Naive thymus-derived CD4-positive, alpha-beta T cell (primary cell): ENCODE measurements at regions of chr19 and their contacts with region 1.

Region 1: GRCh38 chr19:17075035-17075863 is at the starts of genes HAUS8 and MYO9B:
- DNase-seq: peak; percentile 96 to 100 (median 100)
- ATAC-seq: peak; percentile 98
- H3K4me3 ChIP-seq: peak within 1 kb of the TSS; percentile 94
- H3K4me3 Mint-ChIP-seq: peak within 1 kb of the TSS; percentile 96 to 100 (median 98)
- H3K27ac ChIP-seq: peak within 1 kb of the TSS; percentile 88
- H3K27ac Mint-ChIP-seq: peak within 1 kb of the TSS; percentile 86 to 99 (median 97)
- H3K4me1 ChIP-seq: peaks cover 28 to 32% of the 10 kb centered on the region in 2 donors
- H3K4me1 Mint-ChIP-seq: peaks cover 45 to 65% (median 55%) of the 10 kb centered on the region in 7 donors
- H3K27me3 ChIP-seq: no peaks in the 10 kb centered on the region
- H3K27me3 Mint-ChIP-seq: no peaks in the 10 kb centered on the region
- total RNA-seq, gene HAUS8: 16.7 to 31.5 (median 19.3) TPM
- total RNA-seq, gene MYO9B: 154 to 297 (median 205) TPM

Region 2: DNA sequence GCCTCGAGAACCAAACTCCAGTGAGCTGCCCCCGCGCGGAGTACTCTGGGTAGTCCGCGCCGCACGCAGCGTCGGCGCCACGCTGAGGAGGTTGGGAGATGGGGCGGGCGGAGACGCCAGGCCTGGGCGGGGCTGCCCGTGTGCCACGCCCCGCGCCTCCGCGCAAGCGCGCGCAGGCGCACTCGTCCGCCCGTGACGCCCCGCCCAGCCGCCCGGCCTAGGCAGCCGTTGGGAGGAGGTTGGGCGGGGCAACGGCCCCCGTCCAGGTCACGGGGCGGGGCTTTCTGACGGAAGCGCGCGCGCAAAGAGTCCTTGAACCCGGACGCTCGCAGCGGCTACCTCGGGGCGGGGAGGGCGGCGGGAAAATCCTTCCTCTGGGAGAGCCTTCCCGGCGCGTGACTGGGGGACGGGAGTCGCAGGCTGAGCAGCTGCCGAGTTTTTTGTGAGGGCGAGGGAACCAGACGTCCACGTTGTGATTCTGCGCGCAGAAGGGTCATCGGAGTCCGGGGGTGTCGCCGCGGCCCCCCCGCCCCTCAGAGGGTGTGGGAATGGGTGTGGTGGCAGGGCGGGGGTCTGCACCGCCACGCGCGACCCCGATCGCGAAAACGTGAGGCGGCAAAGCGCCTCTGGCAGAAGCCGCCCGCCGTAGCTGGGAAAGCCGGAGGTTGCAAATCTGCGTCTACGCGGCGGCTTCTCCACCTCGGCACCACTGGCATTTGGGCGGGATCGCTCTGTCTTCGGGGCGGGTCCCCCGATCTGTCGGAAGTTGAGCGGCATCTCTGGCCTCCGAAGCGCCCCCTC is 446.9 kb before region 1 on chr19 and contains the start of gene MED26:
- CTCF ChIA-PET with region 1: no interaction called
- POLR2A ChIA-PET with region 1: no interaction called
- intact Hi-C with region 1: loop called (anchors 1 kb)
- DNase-seq: peak; percentile 91 to 97 (median 94)
- ATAC-seq: peak; percentile 97
- H3K4me3 ChIP-seq: peak within 1 kb of the TSS; percentile 92
- H3K4me3 Mint-ChIP-seq: peak within 1 kb of the TSS; percentile 92 to 98 (median 97)
- H3K27ac ChIP-seq: peak within 1 kb of the TSS; percentile 97
- H3K27ac Mint-ChIP-seq: peak within 1 kb of the TSS; percentile 88 to 99 (median 98)
- H3K4me1 ChIP-seq: peaks cover 15% of the 10 kb centered on the region in 2 donors
- H3K4me1 Mint-ChIP-seq: peaks cover 34 to 49% (median 44%) of the 10 kb centered on the region in 7 donors
- H3K27me3 ChIP-seq: no peaks in the 10 kb centered on the region
- H3K27me3 Mint-ChIP-seq: peaks cover 0 to 1% (median 0%) of the 10 kb centered on the region in 5 donors
- total RNA-seq, gene MED26: 14.2 to 34.3 (median 17.4) TPM

Region 3: DNA sequence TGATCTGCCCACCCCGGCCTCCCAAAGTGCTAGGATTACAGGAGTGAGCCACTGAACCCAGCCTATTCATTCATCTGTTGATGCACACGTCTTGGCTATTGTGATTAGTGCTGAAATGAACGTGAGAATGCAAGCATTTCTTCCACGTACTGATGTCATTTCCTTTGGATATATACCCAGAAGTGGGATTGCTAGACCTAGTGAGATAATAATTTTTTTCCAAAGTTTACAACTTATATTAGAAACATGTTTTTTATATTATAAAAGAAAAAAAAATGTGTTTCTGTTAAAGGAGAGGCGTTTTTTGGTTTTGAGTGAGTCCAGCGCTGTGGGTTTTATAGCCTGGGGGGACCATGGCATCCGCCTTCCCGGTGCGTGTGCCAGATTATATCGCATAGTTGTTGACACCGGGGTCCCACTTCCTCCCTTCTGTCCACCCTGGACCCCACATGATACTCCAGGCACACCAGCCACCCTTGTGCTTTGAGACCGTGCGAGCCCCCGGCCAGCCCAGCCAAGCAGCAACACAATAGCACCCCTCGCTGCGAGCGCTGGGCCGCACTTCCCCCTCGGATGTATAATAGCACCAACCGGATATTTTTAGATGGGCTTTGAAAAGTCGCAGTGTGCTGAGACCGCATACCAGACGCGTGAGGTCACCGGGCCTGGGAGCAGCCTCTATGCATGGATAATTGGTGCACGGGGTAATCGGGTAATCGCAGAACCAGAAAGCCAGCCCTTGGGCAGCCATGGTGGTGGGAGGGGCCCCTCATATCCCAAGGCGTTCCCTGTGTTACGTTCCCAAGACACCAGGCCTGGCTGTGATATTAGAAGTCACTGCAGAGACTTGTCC is 60.0 kb after region 1 on chr19:
- CTCF ChIA-PET with region 1: no interaction called
- POLR2A ChIA-PET with region 1: no interaction called
- intact Hi-C with region 1: loop called in 1 of 2 experiments (anchors 2 kb)
- DNase-seq: peak in 8 of 9 donors; percentile 19 to 54 (median 46)
- ATAC-seq: peak; percentile 73
- H3K4me3 ChIP-seq: no peak overlapping the region
- H3K4me3 Mint-ChIP-seq: peak overlapping the region; percentile 41 to 89 (median 79)
- H3K27ac ChIP-seq: no peak overlapping the region
- H3K27ac Mint-ChIP-seq: peak overlapping the region; percentile 40 to 92 (median 85)
- H3K4me1 ChIP-seq: peaks cover 4 to 11% of the 10 kb centered on the region in 2 donors
- H3K4me1 Mint-ChIP-seq: peaks cover 0 to 34% (median 23%) of the 10 kb centered on the region in 7 donors
- H3K27me3 ChIP-seq: no peaks in the 10 kb centered on the region
- H3K27me3 Mint-ChIP-seq: no peaks in the 10 kb centered on the region

Region 4: GRCh38 chr19:17235618-17236377 is 160.5 kb after region 1 on chr19:
- CTCF ChIA-PET with region 1: no interaction called
- POLR2A ChIA-PET with region 1: interaction called, 8 read pairs
- intact Hi-C with region 1: loop called in 1 of 2 experiments (anchors 1 kb)
- DNase-seq: peak; percentile 62 to 75 (median 73)
- ATAC-seq: peak; percentile 95
- H3K4me3 ChIP-seq: peak overlapping the region; percentile 74
- H3K4me3 Mint-ChIP-seq: peak overlapping the region in 9 of 10 donors; percentile 49 to 88 (median 83)
- H3K27ac ChIP-seq: peak overlapping the region; percentile 64
- H3K27ac Mint-ChIP-seq: peak overlapping the region in 1 of 9 donors; percentile 23
- H3K4me1 ChIP-seq: peaks cover 0 to 11% of the 10 kb centered on the region in 2 donors
- H3K4me1 Mint-ChIP-seq: peaks cover 4 to 22% (median 16%) of the 10 kb centered on the region in 7 donors
- H3K27me3 ChIP-seq: no peaks in the 10 kb centered on the region
- H3K27me3 Mint-ChIP-seq: no peaks in the 10 kb centered on the region

Region 5: GRCh38 chr19:17336872-17337722 is 261.8 kb after region 1 on chr19 and contains the start of gene GTPBP3:
- CTCF ChIA-PET with region 1: no interaction called
- POLR2A ChIA-PET with region 1: interaction called, 3 read pairs
- intact Hi-C with region 1: loop called (anchors 1 kb)
- DNase-seq: peak; percentile 84 to 99 (median 95)
- ATAC-seq: peak; percentile 96
- H3K4me3 ChIP-seq: peak within 1 kb of the TSS; percentile 76
- H3K4me3 Mint-ChIP-seq: peak within 1 kb of the TSS; percentile 86 to 96 (median 92)
- H3K27ac ChIP-seq: peak within 1 kb of the TSS; percentile 79
- H3K27ac Mint-ChIP-seq: peak within 1 kb of the TSS; percentile 78 to 95 (median 93)
- H3K4me1 ChIP-seq: peaks cover 16 to 22% of the 10 kb centered on the region in 2 donors
- H3K4me1 Mint-ChIP-seq: peaks cover 22 to 55% (median 27%) of the 10 kb centered on the region in 7 donors
- H3K27me3 ChIP-seq: no peaks in the 10 kb centered on the region
- H3K27me3 Mint-ChIP-seq: no peaks in the 10 kb centered on the region
- total RNA-seq, gene GTPBP3: 29.6 to 59.8 (median 40.4) TPM

Region 6: DNA sequence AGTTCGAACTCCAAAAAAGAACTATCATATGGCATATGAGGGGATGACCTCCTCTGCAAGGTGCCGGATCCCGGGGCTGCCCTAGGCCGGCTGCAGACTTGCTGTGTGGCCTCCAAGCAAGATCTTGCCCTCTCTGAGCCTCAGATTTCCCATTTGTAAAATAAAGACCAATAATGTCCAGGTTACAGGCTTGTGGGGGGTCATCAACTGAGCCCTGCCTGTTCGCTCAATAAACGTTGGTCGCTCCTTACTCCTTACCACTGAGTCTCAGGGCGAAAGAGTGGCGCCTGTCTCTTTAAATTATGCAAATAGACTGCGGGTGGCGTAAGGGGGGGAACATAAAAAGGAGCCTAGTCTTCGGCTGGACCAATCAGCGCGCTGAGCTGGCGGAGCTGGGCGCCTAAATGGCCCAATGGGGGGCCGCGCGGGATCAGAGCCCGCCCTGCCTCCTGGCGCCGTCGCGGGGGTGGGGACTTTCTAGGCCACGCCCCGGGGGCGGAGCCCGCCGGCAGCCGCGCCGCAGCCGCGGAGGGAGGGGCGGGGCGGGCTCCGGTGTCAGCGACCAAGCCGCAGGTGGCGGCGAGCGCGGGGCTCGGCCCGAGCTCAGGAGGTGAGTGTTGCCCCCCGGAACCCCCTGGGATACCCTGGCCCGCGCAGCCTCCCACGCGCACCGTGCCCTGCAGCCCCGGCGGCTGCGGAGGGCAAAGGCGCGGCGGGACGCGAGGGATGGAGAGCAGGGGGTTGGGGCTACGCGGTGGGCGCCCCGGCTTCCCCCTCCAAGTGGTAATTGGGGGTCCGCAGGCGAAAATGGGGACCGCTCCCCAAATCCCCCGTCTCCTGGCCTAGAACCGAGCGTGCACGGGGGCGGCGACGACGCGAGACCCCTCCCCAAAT is 672.2 kb after region 1 on chr19:
- CTCF ChIA-PET with region 1: no interaction called
- POLR2A ChIA-PET with region 1: no interaction called
- intact Hi-C with region 1: loop called in 1 of 2 experiments (anchors 10 kb)
- DNase-seq: peak; percentile 90 to 99 (median 95)
- ATAC-seq: peak; percentile 96
- H3K4me3 ChIP-seq: peak overlapping the region; percentile 59
- H3K4me3 Mint-ChIP-seq: peak overlapping the region; percentile 87 to 100 (median 94)
- H3K27ac ChIP-seq: peak overlapping the region; percentile 73
- H3K27ac Mint-ChIP-seq: peak overlapping the region; percentile 14 to 88 (median 72)
- H3K4me1 ChIP-seq: peaks cover 31 to 37% of the 10 kb centered on the region in 2 donors
- H3K4me1 Mint-ChIP-seq: peaks cover 35 to 49% (median 39%) of the 10 kb centered on the region in 7 donors
- H3K27me3 ChIP-seq: no peaks in the 10 kb centered on the region
- H3K27me3 Mint-ChIP-seq: no peaks in the 10 kb centered on the region